ENCODE measurements at regions of chr11 and their contacts with region 1.

Region 1: GRCh38 chr11:14499554-14500180 is at the start of gene COPB1:
- DNase-seq: peak; percentile 84 to 96 (median 92)
- ATAC-seq: peak; percentile 94
- H3K4me3 ChIP-seq: peak within 1 kb of the TSS; percentile 74 to 75
- H3K4me3 Mint-ChIP-seq: peak within 1 kb of the TSS; percentile 99
- H3K27ac ChIP-seq: peak within 1 kb of the TSS; percentile 65 to 82
- H3K27ac Mint-ChIP-seq: peak within 1 kb of the TSS; percentile 100
- H3K4me1 ChIP-seq: peaks cover 30% of the 10 kb centered on the region
- H3K4me1 Mint-ChIP-seq: peaks cover 51% of the 10 kb centered on the region
- H3K27me3 ChIP-seq: no peaks in the 10 kb centered on the region
- H3K27me3 Mint-ChIP-seq: no peaks in the 10 kb centered on the region
- CTCF ChIP-seq: no peak
- total RNA-seq, gene COPB1: 108 to 114 TPM

Region 2: DNA sequence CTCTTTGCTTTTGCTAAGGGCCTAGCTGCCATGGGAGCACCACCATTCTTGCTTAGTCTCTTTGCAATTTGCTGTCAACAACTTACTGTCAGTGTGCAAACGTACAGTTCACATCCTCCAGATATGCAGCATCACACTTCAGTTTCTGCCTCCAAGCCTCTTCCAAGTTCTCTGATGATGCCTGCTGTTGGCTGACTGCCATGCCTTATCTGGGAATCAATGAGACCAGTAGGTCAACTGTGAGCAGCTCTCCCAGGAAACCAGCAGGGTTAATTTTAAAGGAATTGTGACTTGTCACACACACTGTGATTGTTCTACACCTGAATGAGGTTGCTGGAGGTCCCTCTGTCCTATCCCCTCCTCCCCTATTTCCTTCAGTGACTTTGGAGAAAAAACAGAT is 56.0 kb before region 1 on chr11:
- CTCF ChIA-PET with region 1: no interaction called
- POLR2A ChIA-PET with region 1: no interaction called
- intact Hi-C with region 1: no loop called
- DNase-seq: no peak
- ATAC-seq: no peak
- H3K4me3 ChIP-seq: no peak overlapping the region
- H3K4me3 Mint-ChIP-seq: no peak overlapping the region
- H3K27ac ChIP-seq: no peak overlapping the region
- H3K27ac Mint-ChIP-seq: no peak overlapping the region
- H3K4me1 ChIP-seq: peaks cover 10% of the 10 kb centered on the region
- H3K4me1 Mint-ChIP-seq: peaks cover 26% of the 10 kb centered on the region
- H3K27me3 ChIP-seq: no peaks in the 10 kb centered on the region
- H3K27me3 Mint-ChIP-seq: no peaks in the 10 kb centered on the region
- CTCF ChIP-seq: no peak

Region 3: GRCh38 chr11:14892036-14892567 is 392.4 kb after region 1 on chr11 and contains the start of gene CYP2R1:
- CTCF ChIA-PET with region 1: no interaction called
- POLR2A ChIA-PET with region 1: interaction called, 14 read pairs
- intact Hi-C with region 1: loop called (anchors 1 to 2 kb)
- DNase-seq: peak; percentile 81 to 95 (median 89)
- ATAC-seq: peak; percentile 74
- H3K4me3 ChIP-seq: peak within 1 kb of the TSS; percentile 68 to 75
- H3K4me3 Mint-ChIP-seq: peak within 1 kb of the TSS; percentile 88
- H3K27ac ChIP-seq: peak within 1 kb of the TSS; percentile 49 to 79
- H3K27ac Mint-ChIP-seq: peak within 1 kb of the TSS; percentile 93
- H3K4me1 ChIP-seq: peaks cover 10% of the 10 kb centered on the region
- H3K4me1 Mint-ChIP-seq: peaks cover 42% of the 10 kb centered on the region
- H3K27me3 ChIP-seq: no peaks in the 10 kb centered on the region
- H3K27me3 Mint-ChIP-seq: no peaks in the 10 kb centered on the region
- CTCF ChIP-seq: no peak
- total RNA-seq, gene CYP2R1: 10.7 to 12.6 TPM

Measured in CD8-positive, alpha-beta T cell (primary cell).